ENCODE measurements at regions of chr20 and their contacts with region 1.

Region 1: DNA sequence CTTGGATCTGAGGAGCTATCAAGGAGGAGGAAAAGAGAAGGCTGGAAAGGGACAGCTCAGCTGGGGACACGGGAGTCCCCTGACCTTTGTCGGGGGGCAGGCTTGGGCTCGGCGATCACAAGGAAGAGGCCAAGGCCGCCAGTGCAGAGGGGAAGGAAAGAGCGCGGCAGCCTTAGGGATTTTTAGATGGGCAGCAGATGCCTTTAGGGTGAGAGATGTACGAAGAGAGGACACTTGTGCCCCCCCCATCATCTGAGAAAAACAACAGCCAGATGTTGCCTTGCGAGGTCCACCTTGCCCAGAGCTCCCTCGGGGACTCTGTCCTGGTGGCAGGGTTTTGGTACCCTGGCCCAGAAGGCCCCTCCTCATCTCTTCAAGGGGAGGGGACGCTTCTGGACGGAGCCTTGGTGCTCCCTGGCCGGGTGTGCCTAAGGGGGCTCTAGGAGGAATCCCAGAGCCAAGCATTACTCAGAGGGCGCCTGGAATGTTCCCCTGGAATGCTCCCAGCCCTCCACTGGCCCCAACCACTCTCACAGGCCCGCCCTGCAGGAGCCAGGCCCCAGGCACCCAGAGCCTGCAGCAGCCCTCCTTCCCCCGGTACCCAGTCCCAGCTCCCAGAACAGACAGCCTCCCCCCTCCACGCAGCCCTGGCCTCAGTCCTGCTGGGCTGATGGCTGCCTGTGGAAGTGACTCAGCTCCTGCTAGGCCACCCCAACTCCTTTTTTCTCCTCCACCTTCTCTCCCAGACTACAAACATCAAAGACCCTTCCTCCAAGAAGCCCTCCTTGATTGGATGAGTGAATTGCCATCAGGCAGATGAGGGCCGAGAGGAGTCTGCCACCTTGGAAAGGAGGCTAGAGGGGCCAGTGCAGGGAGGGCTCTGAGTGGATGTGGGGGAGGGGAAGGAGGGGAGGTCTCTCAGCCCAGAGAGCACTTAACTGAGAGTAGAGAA is 1.8 kb downstream of the ADAM33 start:
- DNase-seq: no peak

Region 2: DNA sequence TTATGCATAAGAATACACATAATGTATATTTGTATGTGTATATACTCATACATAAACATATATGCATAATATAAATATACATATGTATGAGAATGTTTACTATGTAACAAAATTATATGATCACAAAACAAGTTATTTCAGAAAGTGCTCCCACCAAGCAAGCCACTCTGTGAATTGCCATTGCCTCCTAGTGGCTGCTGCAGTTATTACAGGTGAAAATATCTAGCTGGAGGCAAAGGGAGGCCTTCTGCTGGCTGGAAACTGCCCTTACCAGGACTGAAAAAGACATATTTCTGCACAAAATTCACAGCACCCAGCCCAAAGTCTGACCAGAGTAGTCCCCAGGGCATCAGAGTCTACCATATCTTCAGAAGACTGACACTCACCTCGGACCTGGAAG is 16.2 kb after region 1 on chr20:
- intact Hi-C with region 1: no loop called
- DNase-seq: no peak

Region 3: DNA sequence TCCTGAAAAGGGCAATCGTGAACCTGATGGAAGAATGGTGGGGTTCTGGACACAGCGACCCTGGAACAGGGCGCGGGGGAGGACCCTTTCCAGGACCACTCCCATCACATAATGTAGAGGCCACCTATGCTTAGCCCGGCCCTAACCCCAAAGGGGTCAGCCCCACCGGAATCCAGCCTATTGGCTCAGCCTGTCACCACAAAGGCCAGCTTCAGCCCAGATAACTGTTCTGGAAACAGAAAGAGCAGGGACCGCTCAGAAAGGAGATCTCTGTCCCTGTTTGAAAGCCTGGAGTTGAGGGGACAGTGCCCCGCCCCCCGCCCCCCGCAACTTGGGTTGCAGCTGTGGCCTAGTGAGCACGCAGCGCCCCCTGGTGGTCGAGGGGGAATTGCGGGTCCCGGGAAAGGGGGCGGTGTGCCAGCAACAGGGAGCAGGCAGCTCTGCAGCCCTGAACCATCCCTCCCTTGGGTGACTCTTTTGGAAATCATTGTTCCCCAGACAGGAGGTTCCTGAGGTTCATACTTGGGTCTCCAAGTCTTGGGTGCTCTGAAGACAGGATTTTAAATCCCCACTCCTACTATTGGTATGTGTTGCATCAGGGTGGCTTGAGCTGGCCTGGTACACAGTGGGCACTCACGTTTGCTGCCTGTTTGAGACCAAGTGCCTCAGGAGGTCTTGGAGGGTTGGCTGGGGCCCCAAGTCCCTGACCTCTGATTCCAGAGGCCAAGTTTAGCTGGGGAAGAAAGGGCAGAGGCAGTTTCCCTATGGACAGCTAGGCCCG is 30.9 kb after region 1 on chr20:
- intact Hi-C with region 1: loop called (anchors 2 kb)
- DNase-seq: peak; percentile 92

Region 4: DNA sequence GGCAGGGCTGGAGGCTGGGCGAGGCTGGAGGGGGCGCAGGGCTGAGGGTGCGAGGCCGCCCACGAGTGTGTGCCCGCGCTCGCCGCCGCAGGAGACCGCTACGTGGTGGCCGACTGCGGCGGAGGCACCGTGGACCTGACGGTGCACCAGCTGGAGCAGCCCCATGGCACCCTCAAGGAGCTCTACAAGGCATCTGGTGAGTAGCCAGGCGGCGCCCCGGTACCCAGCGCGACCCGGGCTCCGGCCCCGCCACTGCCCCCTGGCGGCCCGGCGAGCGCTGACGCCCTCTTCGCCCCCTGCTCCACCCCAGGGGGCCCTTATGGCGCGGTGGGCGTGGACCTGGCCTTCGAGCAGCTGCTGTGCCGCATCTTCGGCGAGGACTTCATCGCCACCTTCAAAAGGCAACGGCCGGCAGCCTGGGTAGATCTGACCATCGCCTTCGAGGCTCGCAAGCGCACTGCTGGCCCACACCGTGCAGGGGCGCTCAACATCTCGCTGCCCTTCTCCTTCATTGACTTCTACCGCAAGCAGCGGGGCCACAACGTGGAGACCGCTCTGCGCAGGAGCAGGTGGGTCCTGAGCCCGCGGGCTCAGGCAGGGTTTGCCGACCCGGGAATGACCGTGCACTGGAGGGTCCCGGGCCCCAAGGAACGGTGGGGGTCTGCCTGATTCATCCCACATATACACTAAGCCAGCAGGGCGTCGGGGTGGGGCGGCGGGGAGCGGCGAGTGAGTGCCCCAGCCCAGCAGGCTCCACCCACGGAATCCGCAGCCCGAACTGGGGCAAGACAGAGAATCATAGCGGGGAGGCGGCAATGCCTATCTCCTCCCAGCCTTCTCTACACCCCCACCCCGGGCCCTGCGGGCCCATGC is 69.9 kb after region 1 on chr20:
- intact Hi-C with region 1: loop called in 1 of 2 experiments (anchors 2 kb)
- DNase-seq: no peak

Region 5: GRCh38 chr20:4578375-4578774 is 898.4 kb after region 1 on chr20:
- intact Hi-C with region 1: loop called in 1 of 2 experiments (anchors 5 kb)
- DNase-seq: no peak